Activated CD4-positive, alpha-beta T cell treated with anti-CD3 and anti-CD28 coated beads, Interleukin-2, amount 10 ng/mL, durations not matched to agents 24 days and 14 days (primary cell): ENCODE measurements at regions of chr19 and their contacts with region 1.

Region 1: GRCh38 chr19:10565567-10566407 is at the start of gene KRI1:
- DNase-seq: peak; percentile 100
- H3K4me3 Mint-ChIP-seq: peak within 1 kb of the TSS; percentile 99
- H3K27ac Mint-ChIP-seq: peak within 1 kb of the TSS; percentile 96
- H3K4me1 Mint-ChIP-seq: peaks cover 47% of the 10 kb centered on the region
- H3K27me3 Mint-ChIP-seq: peaks cover 3% of the 10 kb centered on the region
- total RNA-seq, gene KRI1: 84.0 and 90.6 TPM in 2 replicates

Region 2: GRCh38 chr19:10292206-10292788 is 273.5 kb before region 1 on chr19:
- intact Hi-C with region 1: loop called (anchors 5 kb)
- DNase-seq: peak; percentile 92
- H3K4me3 Mint-ChIP-seq: peak overlapping the region; percentile 88
- H3K27ac Mint-ChIP-seq: peak overlapping the region; percentile 43
- H3K4me1 Mint-ChIP-seq: peaks cover 59% of the 10 kb centered on the region
- H3K27me3 Mint-ChIP-seq: peaks cover 54% of the 10 kb centered on the region

Region 3: DNA sequence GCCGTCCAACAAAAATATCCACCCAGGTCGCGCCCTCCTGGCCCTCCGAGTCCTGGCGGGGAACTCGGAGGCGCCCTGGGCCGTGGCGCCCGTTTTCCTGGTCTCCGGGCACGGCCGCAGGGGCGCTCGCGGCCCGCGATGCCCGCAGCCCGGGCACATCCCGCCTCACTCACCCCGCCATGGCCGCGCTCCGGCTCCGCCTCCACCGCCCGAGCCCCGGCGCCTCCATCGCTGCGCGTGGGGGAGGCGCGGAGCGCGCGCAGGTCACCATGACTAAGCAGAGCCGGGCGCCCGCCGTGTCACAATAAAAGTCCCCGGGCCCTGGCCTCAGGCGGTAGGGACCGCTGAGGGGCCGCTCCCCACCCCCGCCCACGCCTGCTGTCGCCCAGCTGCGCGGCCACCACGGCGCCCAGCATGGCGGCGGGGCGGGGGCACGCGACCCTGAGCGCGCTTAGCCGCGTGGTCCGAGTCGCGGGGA is 63.2 kb before region 1 on chr19:
- intact Hi-C with region 1: loop called (anchors 5 kb)
- DNase-seq: peak; percentile 98
- H3K4me3 Mint-ChIP-seq: peak overlapping the region; percentile 88
- H3K27ac Mint-ChIP-seq: peak overlapping the region; percentile 86
- H3K4me1 Mint-ChIP-seq: peaks cover 37% of the 10 kb centered on the region
- H3K27me3 Mint-ChIP-seq: no peaks in the 10 kb centered on the region

Region 4: GRCh38 chr19:10602330-10603083 is 36.7 kb after region 1 on chr19:
- intact Hi-C with region 1: loop called (anchors 1 kb)
- DNase-seq: peak; percentile 95
- H3K4me3 Mint-ChIP-seq: peak overlapping the region; percentile 99
- H3K27ac Mint-ChIP-seq: peak overlapping the region; percentile 100
- H3K4me1 Mint-ChIP-seq: peaks cover 19% of the 10 kb centered on the region
- H3K27me3 Mint-ChIP-seq: peaks cover 12% of the 10 kb centered on the region

Region 5: GRCh38 chr19:10835754-10836477 is 270.1 kb after region 1 on chr19 and contains the start of gene TMED1:
- intact Hi-C with region 1: loop called (anchors 1 kb)
- DNase-seq: peak; percentile 99
- H3K4me3 Mint-ChIP-seq: peak within 1 kb of the TSS; percentile 98
- H3K27ac Mint-ChIP-seq: peak within 1 kb of the TSS; percentile 99
- H3K4me1 Mint-ChIP-seq: peaks cover 10% of the 10 kb centered on the region
- H3K27me3 Mint-ChIP-seq: no peaks in the 10 kb centered on the region
- total RNA-seq, gene TMED1: 17.6 and 22.4 TPM in 2 replicates